Activated B cell treated with CpG ODN at 0.5 μM for 24 hours (primary cell): ENCODE measurements at regions of chr18 and their contacts with region 1.

Region 1: GRCh38 chr18:9516437-9517064 is 41.2 kb downstream of the RALBP1 start:
- DNase-seq: no peak
- ATAC-seq: peak; percentile 64
- H3K4me3 Mint-ChIP-seq: no peak overlapping the region
- H3K27ac Mint-ChIP-seq: no peak overlapping the region
- H3K4me1 Mint-ChIP-seq: peaks cover 5% of the 10 kb centered on the region
- H3K27me3 Mint-ChIP-seq: no peaks in the 10 kb centered on the region
- CTCF ChIP-seq: peak; percentile 89

Region 2: DNA sequence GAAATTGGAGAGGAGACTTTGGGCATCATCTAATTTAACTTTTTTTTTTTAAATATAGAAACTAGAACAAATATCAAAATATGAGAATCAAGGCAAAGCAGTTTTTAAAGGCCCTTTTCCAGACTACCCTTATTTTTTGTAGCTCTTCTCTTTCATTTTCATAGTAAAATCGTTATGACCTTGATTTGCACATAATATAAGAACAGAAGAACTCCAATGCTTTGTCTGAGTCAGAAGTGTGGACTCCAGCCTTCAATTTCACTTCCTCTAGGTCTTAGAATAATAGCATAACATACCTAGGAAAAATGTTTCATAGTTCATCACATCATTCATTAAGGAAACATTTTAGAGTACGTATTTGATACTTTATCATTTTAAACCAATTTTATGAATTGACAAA is 305.6 kb before region 1 on chr18:
- CTCF ChIA-PET with region 1: no interaction called
- POLR2A ChIA-PET with region 1: no interaction called
- intact Hi-C with region 1: loop called (anchors 5 kb)
- DNase-seq: no peak
- ATAC-seq: no peak
- H3K4me3 Mint-ChIP-seq: no peak overlapping the region
- H3K27ac Mint-ChIP-seq: no peak overlapping the region
- H3K4me1 Mint-ChIP-seq: peaks cover 7% of the 10 kb centered on the region
- H3K27me3 Mint-ChIP-seq: no peaks in the 10 kb centered on the region
- CTCF ChIP-seq: no peak